ENCODE measurements at regions of chr10 and their contacts with region 1.

Region 1: DNA sequence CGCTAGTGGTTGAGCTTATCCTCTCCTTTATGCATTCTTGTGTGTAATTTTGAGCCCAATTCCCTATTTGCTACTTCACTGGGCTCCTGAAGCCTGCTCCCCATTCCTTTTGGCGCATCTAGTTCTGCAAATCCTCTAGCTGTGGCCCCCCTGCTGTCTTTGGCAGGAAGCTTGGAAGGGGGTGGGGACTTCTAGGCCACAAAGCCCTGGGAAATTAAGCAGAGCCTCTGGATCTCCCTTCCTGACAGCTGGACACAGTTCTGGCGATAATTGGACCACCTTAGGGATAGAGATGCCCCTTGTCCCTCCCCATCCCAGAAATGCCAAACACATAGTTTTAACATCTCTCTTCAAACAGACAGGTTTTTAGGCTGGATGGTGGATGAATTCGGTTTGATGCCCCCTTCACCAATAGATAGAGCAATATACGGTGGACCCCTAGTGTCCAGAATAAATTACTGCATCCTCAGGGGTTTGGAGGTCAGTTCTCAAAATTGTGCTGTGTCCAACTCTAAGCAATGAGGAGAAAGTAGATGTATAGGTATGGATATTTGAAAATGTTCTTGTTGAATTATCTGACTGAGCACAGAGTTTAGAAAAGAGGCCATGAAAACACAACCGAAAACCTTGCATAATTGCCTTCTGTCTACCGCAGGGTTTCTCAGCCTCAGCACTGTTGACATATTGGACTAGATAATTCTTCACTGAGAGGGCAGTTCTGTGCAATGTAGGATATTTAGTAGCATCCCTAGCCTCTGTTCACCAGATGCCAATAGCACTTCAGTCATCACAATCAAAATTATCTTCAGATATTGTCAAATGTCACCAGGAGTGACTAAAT is 75.5 kb downstream of the PAPSS2 start:
- DNase-seq: peak in 3 of 5 donors; percentile 25 to 40 (median 34)
- ATAC-seq: peak; percentile 68 to 87 (median 82)
- H3K4me3 ChIP-seq: no peak overlapping the region
- H3K27ac ChIP-seq: no peak overlapping the region
- H3K4me1 ChIP-seq: peaks cover 0 to 21% (median 6%) of the 10 kb centered on the region in 12 donors
- H3K27me3 ChIP-seq: no peaks in the 10 kb centered on the region
- CTCF ChIP-seq: peak; percentile 59 to 86 (median 82)
- POLR2A ChIP-seq: no peak

Region 2: GRCh38 chr10:87531908-87532622 is 203.1 kb before region 1 on chr10:
- intact Hi-C with region 1: loop called (anchors 1 to 10 kb)
- DNase-seq: peak in 2 of 5 donors; percentile 12 to 31
- ATAC-seq: peak; percentile 50 to 79 (median 70)
- H3K4me3 ChIP-seq: peak overlapping the region in 6 of 12 donors; percentile 1 to 12 (median 4)
- H3K27ac ChIP-seq: peak overlapping the region; percentile 34 to 67 (median 58)
- H3K4me1 ChIP-seq: peaks cover 0 to 25% (median 12%) of the 10 kb centered on the region in 12 donors
- H3K27me3 ChIP-seq: no peaks in the 10 kb centered on the region
- CTCF ChIP-seq: no peak
- POLR2A ChIP-seq: no peak

Region 3: DNA sequence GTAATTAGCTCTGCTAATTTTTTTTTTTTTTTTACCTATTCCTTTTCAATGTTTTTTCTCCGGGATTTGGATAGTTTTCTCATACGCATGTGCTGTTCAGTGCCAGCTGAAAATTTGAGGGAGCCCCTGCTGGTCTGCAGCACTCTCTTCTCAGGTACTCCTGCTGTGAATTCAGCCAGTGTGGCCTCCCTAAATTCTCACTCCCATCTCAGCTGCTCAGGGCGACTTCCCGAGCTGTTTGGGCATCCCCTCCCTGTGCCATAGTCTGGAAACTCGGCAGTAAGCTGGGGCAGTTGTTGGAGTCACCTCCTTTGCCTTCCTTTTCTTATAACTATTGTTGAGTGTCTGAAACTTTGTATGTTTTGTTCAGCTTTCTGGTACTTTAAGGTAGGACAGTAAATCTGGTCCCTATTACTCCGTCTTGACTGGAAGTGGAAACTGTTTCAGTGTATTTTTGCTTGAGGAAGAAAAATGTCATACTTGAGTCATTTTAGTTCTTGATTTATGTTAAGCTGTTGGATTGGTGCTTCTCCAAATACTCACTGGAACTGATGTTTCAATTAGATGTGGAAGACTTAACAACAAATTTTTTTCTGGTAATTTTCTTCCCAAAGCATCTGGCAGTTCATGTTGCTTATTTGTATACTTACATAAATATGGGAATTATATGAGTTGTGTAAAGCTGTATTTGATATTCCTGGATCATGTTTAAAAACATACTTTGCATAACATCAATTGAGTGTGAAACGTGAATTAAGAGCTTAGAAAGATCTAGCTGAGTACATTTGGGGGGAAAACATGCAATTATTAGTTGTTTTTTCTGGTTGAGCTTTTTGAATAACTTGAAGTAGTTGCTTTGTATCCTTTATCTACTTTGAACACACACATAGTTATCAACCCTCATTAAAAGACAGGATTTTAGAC is 196.9 kb before region 1 on chr10:
- intact Hi-C with region 1: loop called in 9 of 10 experiments (anchors 2 to 10 kb)
- DNase-seq: no peak
- ATAC-seq: no peak
- H3K4me3 ChIP-seq: no peak overlapping the region
- H3K27ac ChIP-seq: no peak overlapping the region
- H3K4me1 ChIP-seq: peaks cover 0 to 9% (median 2%) of the 10 kb centered on the region in 12 donors
- H3K27me3 ChIP-seq: no peaks in the 10 kb centered on the region
- CTCF ChIP-seq: no peak
- POLR2A ChIP-seq: no peak

Region 4: GRCh38 chr10:87654212-87654611 is 81.0 kb before region 1 on chr10:
- intact Hi-C with region 1: loop called (anchors 1 to 2 kb)
- DNase-seq: no peak
- ATAC-seq: no peak
- H3K4me3 ChIP-seq: no peak overlapping the region
- H3K27ac ChIP-seq: no peak overlapping the region
- H3K4me1 ChIP-seq: peaks cover 0 to 12% (median 0%) of the 10 kb centered on the region in 12 donors
- H3K27me3 ChIP-seq: no peaks in the 10 kb centered on the region
- CTCF ChIP-seq: no peak
- POLR2A ChIP-seq: no peak